ENCODE measurements at regions of chr10 and their contacts with region 1.

Region 1: GRCh38 chr10:3911713-3912442 is 126.9 kb upstream of the KLF6 start:
- DNase-seq: no peak
- ATAC-seq: peak; percentile 85

Region 2: DNA sequence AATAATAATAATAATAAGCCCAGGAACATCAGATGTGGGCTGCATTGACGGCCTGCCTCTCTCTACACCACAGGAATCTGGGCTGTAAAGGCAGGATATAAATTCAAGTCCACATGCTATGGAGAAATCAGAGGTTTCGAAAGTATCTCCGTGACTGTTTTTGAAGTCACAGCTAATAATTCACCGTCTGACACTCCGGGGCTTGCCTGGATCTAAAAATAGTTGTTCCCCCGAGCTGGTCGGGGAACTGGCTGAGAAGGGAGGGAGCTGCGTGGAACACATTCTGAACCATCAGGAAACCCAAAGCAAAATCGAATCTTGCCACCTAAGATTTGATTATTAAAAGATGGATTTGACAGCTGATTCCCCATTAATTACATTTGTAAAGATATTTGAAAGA is 162.3 kb before region 1 on chr10:
- intact Hi-C with region 1: no loop called
- DNase-seq: no peak
- ATAC-seq: peak; percentile 82

Region 3: DNA sequence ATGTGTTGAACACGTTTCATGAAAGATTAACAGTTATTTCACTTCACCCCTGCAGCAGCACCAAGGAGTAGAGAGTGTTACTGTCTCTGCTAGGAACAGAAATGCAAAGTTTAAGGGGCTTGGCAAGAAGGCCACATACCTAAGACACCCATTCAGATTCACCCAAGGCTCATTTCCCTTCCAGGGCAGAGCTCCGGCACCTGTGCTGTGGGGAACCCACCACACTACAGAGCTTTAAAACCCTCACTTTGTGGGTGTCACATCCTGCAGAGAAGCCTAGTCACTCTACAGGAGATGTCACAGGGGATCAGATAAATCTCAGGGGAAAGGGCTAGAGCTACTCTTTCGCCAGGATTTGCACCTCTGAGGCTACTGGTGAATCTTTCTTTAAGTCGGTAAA is 49.2 kb after region 1 on chr10:
- intact Hi-C with region 1: no loop called
- DNase-seq: no peak
- ATAC-seq: no peak

Region 4: DNA sequence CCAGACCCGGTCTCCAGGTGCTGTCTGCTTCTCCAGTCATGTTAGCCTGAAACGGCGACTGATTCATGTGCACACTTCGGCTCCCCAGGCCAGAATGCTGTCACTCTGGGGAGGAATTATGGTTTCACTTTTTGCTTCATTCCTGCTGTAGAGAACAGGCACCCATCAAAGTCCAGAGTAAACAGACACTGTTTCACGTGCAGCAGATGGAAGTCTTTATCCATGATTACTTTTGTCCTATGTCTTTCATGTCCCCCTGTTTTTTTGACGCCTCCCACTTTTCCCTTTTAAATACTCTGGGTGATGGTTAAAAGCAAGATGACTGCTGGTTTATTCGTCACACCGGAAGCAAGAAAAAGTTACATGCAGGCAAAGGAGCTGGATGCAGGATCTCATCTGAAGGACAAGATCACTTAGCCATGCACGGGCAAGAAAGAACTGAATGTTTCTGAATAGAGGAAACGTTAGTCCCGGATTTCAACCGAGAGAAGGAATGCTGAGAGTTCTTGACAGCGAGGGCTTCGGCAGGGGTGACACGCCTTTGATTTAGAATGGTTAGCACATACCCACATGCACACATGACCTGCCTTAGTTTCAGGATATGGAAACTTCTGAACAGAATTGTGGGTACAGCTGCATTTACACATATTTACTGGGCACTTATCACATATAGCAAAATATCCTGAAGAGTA is 123.2 kb after region 1 on chr10:
- intact Hi-C with region 1: no loop called
- DNase-seq: no peak
- ATAC-seq: peak; percentile 70

Region 5: DNA sequence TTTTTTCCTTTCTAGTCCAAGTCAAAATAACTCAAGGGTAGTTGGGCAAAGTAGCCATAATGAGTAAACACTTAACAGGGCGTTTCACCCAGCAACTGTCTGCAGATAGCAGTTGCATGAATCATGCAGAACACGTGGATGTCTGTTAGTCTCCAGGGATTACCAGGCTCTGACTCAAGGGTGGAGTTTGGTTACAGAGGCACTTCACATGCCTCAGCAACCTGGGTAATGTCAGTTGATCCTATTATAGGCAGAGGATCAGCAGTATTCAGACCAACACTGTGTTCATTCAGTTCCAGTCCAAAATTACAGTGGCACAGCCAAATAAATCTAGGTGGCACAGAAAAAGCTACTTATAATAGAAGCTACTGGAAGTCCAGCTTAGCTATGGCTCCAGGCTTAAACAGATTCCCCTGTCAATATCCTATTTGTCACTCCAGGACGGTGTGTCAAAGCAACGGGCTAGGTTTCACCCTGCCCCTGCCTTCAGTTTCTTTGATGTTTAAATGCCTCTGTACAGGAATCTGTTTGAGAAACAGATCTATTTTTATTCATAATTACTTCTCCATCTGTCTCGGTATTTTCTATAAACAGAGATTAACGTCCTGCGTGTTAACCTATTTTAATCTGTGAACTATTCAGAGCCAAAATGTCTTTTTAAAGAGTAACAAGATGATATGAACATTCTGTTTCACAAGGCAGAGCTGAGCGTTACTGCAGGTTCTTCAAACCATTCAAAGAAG is 751.5 kb after region 1 on chr10:
- intact Hi-C with region 1: loop called (anchors 10 kb)
- DNase-seq: no peak
- ATAC-seq: peak; percentile 89

Measured in Right ventricle myocardium superior (tissue), 1 donor.